ENCODE measurements at regions of chr19 and their contacts with region 1.

Region 1: GRCh38 chr19:58218899-58219298 is 9.8 kb upstream of the ZNF544 start:
- H3K4me3 ChIP-seq: no peak overlapping the region
- H3K27ac ChIP-seq: no peak overlapping the region
- H3K4me1 ChIP-seq: no peaks in the 10 kb centered on the region
- CTCF ChIP-seq: no peak

Region 2: GRCh38 chr19:58243351-58243750 is 24.5 kb after region 1 on chr19:
- CTCF ChIA-PET with region 1: no interaction called
- POLR2A ChIA-PET with region 1: no interaction called
- H3K4me3 ChIP-seq: no peak overlapping the region
- H3K27ac ChIP-seq: no peak overlapping the region
- H3K4me1 ChIP-seq: no peaks in the 10 kb centered on the region
- CTCF ChIP-seq: no peak

Region 3: GRCh38 chr19:58296104-58296503 is 77.2 kb after region 1 on chr19:
- CTCF ChIA-PET with region 1: interaction called, 3 read pairs
- POLR2A ChIA-PET with region 1: interaction called, 12 read pairs
- H3K4me3 ChIP-seq: no peak overlapping the region
- H3K27ac ChIP-seq: no peak overlapping the region
- H3K4me1 ChIP-seq: no peaks in the 10 kb centered on the region
- CTCF ChIP-seq: no peak

Measured in HEK293 (cell line).